CD4-positive, alpha-beta T cell (primary cell): ENCODE measurements at regions of chr6 and their contacts with region 1.

Region 1: GRCh38 chr6:31079656-31080261 is 32.6 kb downstream of the C6orf15 start:
- DNase-seq: peak; percentile 52 to 82 (median 63)
- ATAC-seq: peak; percentile 94
- H3K4me3 ChIP-seq: peak overlapping the region; percentile 35
- H3K4me3 Mint-ChIP-seq: peak overlapping the region; percentile 61
- H3K27ac ChIP-seq: no peak overlapping the region
- H3K27ac Mint-ChIP-seq: no peak overlapping the region
- H3K4me1 ChIP-seq: peaks cover 9% of the 10 kb centered on the region
- H3K4me1 Mint-ChIP-seq: peaks cover 9% of the 10 kb centered on the region
- H3K27me3 ChIP-seq: no peaks in the 10 kb centered on the region
- H3K27me3 Mint-ChIP-seq: peaks cover 5% of the 10 kb centered on the region
- CTCF ChIP-seq: peak; percentile 96

Region 2: DNA sequence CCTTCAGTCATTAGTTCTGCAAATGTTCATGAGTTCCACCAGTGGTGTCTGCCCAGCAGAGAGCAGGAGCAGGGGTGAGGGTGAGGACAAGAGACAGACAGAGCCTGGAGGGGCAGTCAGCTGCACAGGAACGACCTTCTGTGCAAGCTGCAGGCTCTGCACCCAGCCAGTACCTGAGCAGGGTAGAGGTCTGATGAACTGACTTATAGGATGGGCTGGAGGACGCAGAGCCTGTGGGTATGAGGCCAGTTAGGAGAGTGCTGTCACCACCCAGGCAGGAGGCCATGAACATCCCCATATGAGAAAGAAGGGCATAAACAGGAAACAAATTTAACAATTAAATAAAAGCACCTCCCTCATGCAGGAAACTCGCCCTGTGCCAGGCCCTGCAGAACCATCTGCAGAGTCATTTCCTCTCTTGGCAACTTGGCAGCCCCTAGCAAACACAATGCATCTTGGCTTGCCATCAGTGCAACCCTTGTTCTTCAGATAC is 14.7 kb after region 1 on chr6:
- CTCF ChIA-PET with region 1: interaction called, 12 read pairs
- POLR2A ChIA-PET with region 1: interaction called, 7 read pairs
- intact Hi-C with region 1: no loop called
- DNase-seq: peak; percentile 12 to 82 (median 56)
- ATAC-seq: peak; percentile 89
- H3K4me3 ChIP-seq: no peak overlapping the region
- H3K4me3 Mint-ChIP-seq: peak overlapping the region; percentile 46
- H3K27ac ChIP-seq: peak overlapping the region; percentile 44 to 57
- H3K27ac Mint-ChIP-seq: peak overlapping the region; percentile 86
- H3K4me1 ChIP-seq: peaks cover 52% of the 10 kb centered on the region
- H3K4me1 Mint-ChIP-seq: peaks cover 62% of the 10 kb centered on the region
- H3K27me3 ChIP-seq: no peaks in the 10 kb centered on the region
- H3K27me3 Mint-ChIP-seq: no peaks in the 10 kb centered on the region
- CTCF ChIP-seq: no peak